CD8-positive, alpha-beta memory T cell (primary cell): ENCODE measurements at regions of chr5 and their contacts with region 1.

Region 1: DNA sequence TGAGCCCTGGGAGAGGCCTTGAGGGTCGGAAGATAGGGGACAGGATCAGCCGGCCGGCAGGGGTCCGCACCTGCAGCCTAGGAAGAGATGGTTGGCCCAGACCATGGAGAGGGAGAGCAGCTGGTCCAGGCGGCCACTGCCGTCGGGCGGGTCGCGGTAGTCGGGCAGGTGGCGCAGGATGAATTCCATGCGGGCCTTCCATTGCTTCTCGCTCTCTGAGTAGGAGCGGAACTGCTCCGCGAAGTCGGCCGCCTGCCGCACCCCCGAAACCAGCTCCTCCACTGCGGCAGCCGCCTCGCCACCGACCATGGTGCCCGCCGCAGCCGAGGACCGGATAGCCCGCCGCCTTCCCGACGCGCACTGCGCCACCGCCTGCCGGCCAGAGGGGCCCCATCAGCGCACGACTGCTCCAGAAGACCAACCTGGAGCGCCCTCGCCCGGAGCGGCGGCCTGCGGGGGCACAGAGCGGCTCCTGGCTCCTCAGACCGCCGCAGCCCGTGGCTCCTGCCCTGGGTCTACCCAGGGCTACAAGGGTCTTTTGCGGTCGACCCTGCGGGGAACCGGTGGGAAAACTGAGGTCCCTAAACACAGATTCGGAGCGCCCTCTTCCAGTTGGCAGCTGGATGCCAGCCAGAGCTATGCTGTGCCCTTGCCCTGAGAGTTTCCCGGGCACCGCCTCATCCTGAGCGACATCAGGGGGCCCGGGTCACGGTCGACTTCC is at the start of gene CDKN2AIPNL:
- DNase-seq: peak; percentile 78 to 92 (median 87)
- H3K4me3 ChIP-seq: peak within 1 kb of the TSS; percentile 90
- H3K4me3 Mint-ChIP-seq: peak within 1 kb of the TSS; percentile 91 to 97 (median 92)
- H3K27ac ChIP-seq: peak within 1 kb of the TSS; percentile 81
- H3K27ac Mint-ChIP-seq: peak within 1 kb of the TSS; percentile 75 to 98 (median 90)
- H3K4me1 ChIP-seq: peaks cover 27% of the 10 kb centered on the region
- H3K4me1 Mint-ChIP-seq: peaks cover 29 to 55% (median 49%) of the 10 kb centered on the region in 3 donors
- H3K27me3 ChIP-seq: no peaks in the 10 kb centered on the region
- H3K27me3 Mint-ChIP-seq: peaks cover 0 to 2% of the 10 kb centered on the region in 2 donors
- total RNA-seq, gene CDKN2AIPNL: 42.1 to 42.2 TPM

Region 2: GRCh38 chr5:133848341-133848811 is 563.3 kb before region 1 on chr5:
- CTCF ChIA-PET with region 1: no interaction called
- POLR2A ChIA-PET with region 1: no interaction called
- DNase-seq: no peak
- H3K4me3 ChIP-seq: no peak overlapping the region
- H3K4me3 Mint-ChIP-seq: peak overlapping the region in 2 of 7 donors; percentile 28 to 51
- H3K27ac ChIP-seq: no peak overlapping the region
- H3K27ac Mint-ChIP-seq: no peak overlapping the region
- H3K4me1 ChIP-seq: no peaks in the 10 kb centered on the region
- H3K4me1 Mint-ChIP-seq: peaks cover 5 to 12% (median 5%) of the 10 kb centered on the region in 3 donors
- H3K27me3 ChIP-seq: peaks cover 5% of the 10 kb centered on the region
- H3K27me3 Mint-ChIP-seq: peaks cover 20 to 35% of the 10 kb centered on the region in 2 donors

Region 3: DNA sequence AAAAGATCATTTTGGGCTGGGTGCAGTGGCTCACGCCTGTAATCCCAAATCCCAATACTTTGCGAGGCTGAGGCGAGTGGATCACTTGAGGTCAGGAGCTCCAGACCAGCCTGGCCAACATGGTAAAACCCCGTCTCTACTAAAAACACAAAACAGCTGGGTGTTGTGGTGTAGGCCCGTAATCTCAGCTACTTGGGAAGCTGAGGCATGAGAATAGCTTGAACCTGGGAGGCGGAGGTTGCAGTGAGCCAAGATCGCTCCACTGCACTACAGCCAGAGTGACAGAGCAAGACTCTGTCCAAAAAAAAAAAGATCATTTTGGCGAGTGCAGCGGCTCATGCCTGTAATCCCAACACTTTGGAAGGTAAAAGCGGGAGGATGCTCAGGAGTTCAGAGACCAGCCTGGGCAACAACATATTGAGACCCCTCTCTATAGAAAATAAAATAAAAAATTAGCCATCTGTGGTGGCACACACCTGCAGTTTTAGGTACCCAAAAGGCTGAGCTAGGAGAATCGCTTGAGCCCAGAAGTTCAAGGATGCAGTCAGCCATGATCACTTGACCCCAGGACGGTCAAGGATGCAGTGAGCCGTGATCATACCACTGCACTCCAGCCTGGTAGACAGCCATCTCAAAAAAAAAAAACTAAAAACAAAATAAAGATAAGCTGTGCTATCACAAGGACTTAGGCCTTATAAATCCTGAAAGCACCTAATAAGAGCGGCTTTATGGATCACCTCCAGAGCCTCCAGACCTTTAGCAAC is 202.0 kb before region 1 on chr5:
- CTCF ChIA-PET with region 1: no interaction called
- POLR2A ChIA-PET with region 1: no interaction called
- DNase-seq: no peak
- H3K4me3 ChIP-seq: no peak overlapping the region
- H3K4me3 Mint-ChIP-seq: peak overlapping the region in 6 of 7 donors; percentile 7 to 74 (median 38)
- H3K27ac ChIP-seq: no peak overlapping the region
- H3K27ac Mint-ChIP-seq: peak overlapping the region in 5 of 8 donors; percentile 10 to 61 (median 19)
- H3K4me1 ChIP-seq: peaks cover 55% of the 10 kb centered on the region
- H3K4me1 Mint-ChIP-seq: peaks cover 69 to 87% (median 81%) of the 10 kb centered on the region in 3 donors
- H3K27me3 ChIP-seq: no peaks in the 10 kb centered on the region
- H3K27me3 Mint-ChIP-seq: peaks cover 0 to 4% of the 10 kb centered on the region in 2 donors

Region 4: DNA sequence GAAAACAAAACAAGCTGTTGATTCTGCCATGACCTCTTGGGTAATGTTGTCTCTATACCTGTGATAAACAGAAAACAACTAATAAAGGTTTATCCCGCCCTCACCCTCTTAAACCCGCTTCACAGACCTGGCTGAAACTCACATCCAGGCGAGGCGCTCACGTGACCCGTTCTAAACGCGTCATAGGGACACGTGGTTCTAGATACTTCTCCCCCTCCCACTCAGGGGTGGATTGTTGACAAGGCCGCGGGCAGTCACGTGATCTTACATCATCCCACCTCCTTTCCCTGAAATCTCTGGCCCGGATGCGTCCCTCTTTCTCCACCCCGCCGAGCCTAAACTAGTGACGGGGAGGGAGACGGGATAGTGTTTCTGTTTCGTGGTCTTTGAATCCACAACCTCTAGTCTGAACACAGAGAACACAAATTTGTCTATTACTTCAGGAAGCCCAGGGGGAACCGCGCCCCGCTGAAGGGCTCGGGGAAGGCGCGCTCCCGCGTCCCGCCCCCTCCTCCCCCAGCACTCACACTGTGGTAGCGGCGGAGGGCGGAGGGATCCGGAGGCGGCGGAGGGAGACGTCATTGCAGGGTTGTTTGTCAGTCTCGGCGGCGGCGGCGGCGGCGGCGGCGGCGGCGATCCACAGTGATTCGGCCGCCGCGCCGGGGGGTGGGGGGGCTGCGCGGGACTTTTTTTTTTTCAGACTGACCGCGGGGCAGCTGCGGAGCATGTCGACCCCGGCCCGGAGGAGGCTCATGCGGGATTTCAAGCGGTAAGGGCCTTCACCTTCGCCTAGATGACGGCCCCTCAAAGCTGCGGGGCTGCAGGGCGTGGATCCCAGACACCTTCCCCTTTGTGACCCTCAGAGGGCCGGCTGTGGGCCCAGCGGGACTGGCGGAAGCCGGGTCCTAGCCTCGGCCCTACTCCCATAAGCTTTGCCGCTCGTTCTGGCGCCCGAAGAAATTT is 40.6 kb before region 1 on chr5 and contains the start of gene UBE2B:
- CTCF ChIA-PET with region 1: interaction called, 8 read pairs
- POLR2A ChIA-PET with region 1: interaction called, 14 read pairs
- DNase-seq: peak; percentile 94 to 98 (median 97)
- H3K4me3 ChIP-seq: peak within 1 kb of the TSS; percentile 66
- H3K4me3 Mint-ChIP-seq: peak within 1 kb of the TSS; percentile 88 to 99 (median 98)
- H3K27ac ChIP-seq: peak within 1 kb of the TSS; percentile 100
- H3K27ac Mint-ChIP-seq: peak within 1 kb of the TSS; percentile 97 to 100 (median 100)
- H3K4me1 ChIP-seq: peaks cover 60% of the 10 kb centered on the region
- H3K4me1 Mint-ChIP-seq: peaks cover 46 to 70% (median 66%) of the 10 kb centered on the region in 3 donors
- H3K27me3 ChIP-seq: no peaks in the 10 kb centered on the region
- H3K27me3 Mint-ChIP-seq: peaks cover 0 to 10% of the 10 kb centered on the region in 2 donors
- total RNA-seq, gene UBE2B: 105 TPM

Region 5: GRCh38 chr5:134465816-134466240 is 54.1 kb after region 1 on chr5:
- CTCF ChIA-PET with region 1: interaction called, 11 read pairs
- POLR2A ChIA-PET with region 1: interaction called, 3 read pairs
- DNase-seq: peak; percentile 33 to 60 (median 46)
- H3K4me3 ChIP-seq: peak overlapping the region; percentile 67
- H3K4me3 Mint-ChIP-seq: peak overlapping the region; percentile 82 to 91 (median 85)
- H3K27ac ChIP-seq: peak overlapping the region; percentile 82
- H3K27ac Mint-ChIP-seq: peak overlapping the region; percentile 33 to 96 (median 84)
- H3K4me1 ChIP-seq: peaks cover 14% of the 10 kb centered on the region
- H3K4me1 Mint-ChIP-seq: peaks cover 6 to 29% (median 10%) of the 10 kb centered on the region in 3 donors
- H3K27me3 ChIP-seq: no peaks in the 10 kb centered on the region
- H3K27me3 Mint-ChIP-seq: no peaks in the 10 kb centered on the region

Region 6: GRCh38 chr5:134509329-134510082 is 97.8 kb after region 1 on chr5:
- CTCF ChIA-PET with region 1: no interaction called
- POLR2A ChIA-PET with region 1: no interaction called
- DNase-seq: no peak
- H3K4me3 ChIP-seq: no peak overlapping the region
- H3K4me3 Mint-ChIP-seq: no peak overlapping the region
- H3K27ac ChIP-seq: no peak overlapping the region
- H3K27ac Mint-ChIP-seq: no peak overlapping the region
- H3K4me1 ChIP-seq: peaks cover 11% of the 10 kb centered on the region
- H3K4me1 Mint-ChIP-seq: peaks cover 1 to 5% (median 4%) of the 10 kb centered on the region in 3 donors
- H3K27me3 ChIP-seq: no peaks in the 10 kb centered on the region
- H3K27me3 Mint-ChIP-seq: no peaks in the 10 kb centered on the region

Region 7: DNA sequence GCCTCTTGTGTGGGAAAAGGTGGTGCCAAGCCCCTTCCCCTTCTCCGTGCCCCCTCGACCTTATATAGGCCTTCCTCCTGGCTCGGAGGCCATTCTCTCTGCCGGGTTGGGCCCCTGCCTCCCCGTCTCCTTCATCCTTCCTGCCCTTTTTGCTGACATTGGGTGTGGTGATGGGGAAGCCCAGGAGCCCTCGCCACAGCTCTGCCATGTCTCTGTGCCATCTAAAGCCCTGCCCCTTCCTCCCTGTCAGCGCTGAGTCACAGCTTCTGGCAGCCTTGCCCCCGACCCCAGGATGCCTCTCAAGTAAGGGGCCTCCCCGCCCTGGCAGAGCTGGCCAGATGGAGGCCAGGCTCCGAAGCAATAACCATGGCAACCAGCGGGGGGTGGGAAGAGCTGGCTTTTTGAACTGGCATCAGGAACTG is 144.2 kb after region 1 on chr5:
- CTCF ChIA-PET with region 1: interaction called, 12 read pairs
- POLR2A ChIA-PET with region 1: interaction called, 3 read pairs
- DNase-seq: peak; percentile 77 to 90 (median 79)
- H3K4me3 ChIP-seq: peak overlapping the region; percentile 18
- H3K4me3 Mint-ChIP-seq: peak overlapping the region; percentile 0 to 73 (median 53)
- H3K27ac ChIP-seq: peak overlapping the region; percentile 55
- H3K27ac Mint-ChIP-seq: peak overlapping the region; percentile 84 to 98 (median 96)
- H3K4me1 ChIP-seq: peaks cover 35% of the 10 kb centered on the region
- H3K4me1 Mint-ChIP-seq: peaks cover 40 to 68% (median 48%) of the 10 kb centered on the region in 3 donors
- H3K27me3 ChIP-seq: no peaks in the 10 kb centered on the region
- H3K27me3 Mint-ChIP-seq: peaks cover 0 to 1% of the 10 kb centered on the region in 2 donors

Region 8: DNA sequence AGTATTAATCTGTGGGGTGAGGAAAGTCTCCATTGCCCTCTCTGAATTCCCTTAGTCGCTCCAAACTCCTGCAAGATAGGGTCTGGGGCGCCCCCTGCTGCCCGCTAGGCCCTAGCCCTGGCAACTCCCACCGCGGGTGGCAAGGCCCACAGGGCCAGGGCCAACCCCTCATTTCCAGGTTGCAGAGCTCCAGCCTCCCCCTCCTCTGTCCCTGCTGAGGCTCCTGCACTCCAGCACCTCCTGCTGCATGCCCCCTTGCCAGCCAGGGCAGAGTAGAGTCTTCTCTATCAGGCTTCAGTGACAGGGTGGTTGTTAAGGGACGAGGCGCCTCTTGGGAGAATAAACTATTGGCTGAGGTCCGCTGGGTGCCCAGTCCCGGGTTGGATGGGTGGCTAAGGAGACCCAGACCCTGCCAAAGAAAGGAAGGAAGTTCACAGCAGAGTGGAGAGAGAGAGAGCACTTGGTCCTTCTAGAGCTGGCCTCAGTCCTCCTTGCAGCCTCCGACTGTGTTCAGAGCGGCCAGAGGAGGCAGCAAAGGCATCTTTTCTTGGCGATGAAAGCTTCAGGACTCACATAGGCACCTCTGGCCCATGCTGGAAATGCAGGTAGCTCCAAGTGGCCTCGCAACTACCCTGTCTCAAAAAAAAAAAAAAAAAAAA is 175.3 kb after region 1 on chr5:
- CTCF ChIA-PET with region 1: interaction called, 10 read pairs
- POLR2A ChIA-PET with region 1: interaction called, 3 read pairs
- DNase-seq: peak; percentile 68 to 85 (median 73)
- H3K4me3 ChIP-seq: no peak overlapping the region
- H3K4me3 Mint-ChIP-seq: peak overlapping the region in 2 of 7 donors; percentile 37 to 51
- H3K27ac ChIP-seq: no peak overlapping the region
- H3K27ac Mint-ChIP-seq: peak overlapping the region in 3 of 8 donors; percentile 32 to 63 (median 40)
- H3K4me1 ChIP-seq: peaks cover 5% of the 10 kb centered on the region
- H3K4me1 Mint-ChIP-seq: peaks cover 7 to 12% (median 9%) of the 10 kb centered on the region in 3 donors
- H3K27me3 ChIP-seq: no peaks in the 10 kb centered on the region
- H3K27me3 Mint-ChIP-seq: no peaks in the 10 kb centered on the region